ENCODE measurements at regions of chr6 and their contacts with region 1.

Region 1: DNA sequence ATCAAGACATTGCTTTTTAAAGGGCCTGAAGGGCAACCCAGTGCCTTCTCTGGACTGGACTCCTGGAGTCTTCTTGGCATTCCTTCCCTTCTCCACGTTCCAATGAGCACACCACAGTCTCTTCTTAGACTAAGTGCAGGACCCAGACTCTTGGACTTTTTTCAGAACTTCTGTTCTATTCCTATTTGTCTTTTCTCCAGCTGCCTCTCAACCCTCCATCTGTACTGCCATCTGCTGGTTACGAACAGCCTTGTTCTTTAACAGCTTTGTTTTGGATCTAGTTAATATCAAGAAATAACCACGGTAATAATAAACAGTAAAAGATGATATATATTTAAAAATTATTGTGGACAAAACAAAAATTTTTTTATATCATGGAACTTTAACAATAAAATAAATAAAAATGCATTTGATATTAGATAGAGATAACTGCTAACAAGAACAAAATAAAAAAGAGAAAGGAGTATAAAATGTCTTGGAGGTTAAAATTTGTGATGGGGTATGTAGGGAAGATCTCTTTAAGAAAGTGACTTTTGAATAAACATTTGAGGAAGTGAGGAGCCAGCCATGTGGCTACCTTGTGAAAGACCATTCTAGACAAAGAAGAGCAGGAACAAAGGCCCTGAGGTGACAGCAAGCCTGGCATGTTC is 105.1 kb upstream of the HCRTR2 start:
- DNase-seq: peak; percentile 36
- H3K4me3 ChIP-seq: no peak overlapping the region
- H3K27ac ChIP-seq: no peak overlapping the region
- H3K4me1 ChIP-seq: no peaks in the 10 kb centered on the region
- H3K27me3 ChIP-seq: no peaks in the 10 kb centered on the region
- CTCF ChIP-seq: peak; percentile 39 to 77 (median 62)
- EP300 ChIP-seq: no peak
- POLR2A ChIP-seq: no peak

Region 2: GRCh38 chr6:55009131-55009530 is 60.1 kb before region 1 on chr6:
- in situ Hi-C with region 1: loop called in 1 of 4 experiments (anchors 10 kb)
- intact Hi-C with region 1: no loop called
- DNase-seq: no peak
- H3K4me3 ChIP-seq: no peak overlapping the region
- H3K27ac ChIP-seq: no peak overlapping the region
- H3K4me1 ChIP-seq: peaks cover 0 to 3% (median 0%) of the 10 kb centered on the region in 4 donors
- H3K27me3 ChIP-seq: no peaks in the 10 kb centered on the region
- CTCF ChIP-seq: no peak
- EP300 ChIP-seq: no peak
- POLR2A ChIP-seq: no peak

Measured in transverse colon (tissue), 4 donors.